HCT116 (cell line): ENCODE measurements at regions of chr16 and their contacts with region 1.

Region 1: DNA sequence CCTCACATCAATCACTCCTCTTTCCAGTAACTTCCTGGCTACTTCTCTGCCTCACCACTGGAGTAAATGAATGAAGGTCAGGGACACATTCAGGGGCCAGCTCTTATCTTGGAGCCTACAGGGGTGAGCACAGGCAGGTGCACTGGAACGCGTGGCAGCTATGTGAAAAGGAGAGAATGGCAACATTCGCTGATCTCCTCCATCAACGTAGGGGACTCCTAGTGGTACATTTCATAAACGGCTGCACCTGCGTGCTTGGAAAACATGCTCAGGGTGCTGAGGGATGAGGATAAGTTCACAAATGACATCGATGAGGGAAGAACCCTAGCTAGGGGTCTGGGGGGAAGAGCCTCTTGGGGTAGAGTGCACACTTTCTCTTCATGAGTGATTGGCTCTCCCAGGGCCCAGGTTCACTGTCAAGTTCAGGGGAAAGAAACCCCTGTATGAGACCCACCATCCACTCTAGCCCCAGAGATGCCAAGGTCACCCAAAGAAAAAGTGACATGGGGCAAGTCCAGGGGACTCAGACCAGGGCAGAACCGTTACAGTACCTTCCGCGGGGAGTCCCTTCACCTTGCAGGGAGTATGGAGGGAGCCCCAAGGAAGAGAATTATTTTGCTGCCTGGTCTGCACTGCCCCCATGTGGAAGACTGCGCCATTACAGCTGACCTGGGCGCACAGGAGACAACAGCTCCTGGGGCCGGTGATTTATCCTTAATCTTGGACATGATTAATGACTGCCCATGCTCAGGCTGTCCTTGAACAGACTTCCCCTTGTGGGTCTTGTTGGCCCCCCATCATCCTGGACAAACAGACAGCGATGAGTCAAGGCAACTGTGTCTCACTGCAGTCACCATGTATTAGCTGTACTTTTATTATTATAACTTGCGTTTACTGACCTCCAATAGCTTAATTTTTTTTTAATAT is 30.1 kb downstream of the VAC14 start:
- DNase-seq: peak; percentile 32
- ATAC-seq: peak; percentile 87
- H3K4me3 ChIP-seq: no peak overlapping the region
- H3K27ac ChIP-seq: no peak overlapping the region
- H3K4me1 ChIP-seq: peaks cover 3 to 18% of the 10 kb centered on the region in 2 experiments
- H3K27me3 ChIP-seq: no peaks in the 10 kb centered on the region
- CTCF ChIP-seq: peak; percentile 84 to 97 (median 92)
- POLR2A ChIP-seq: no peak
- RAD21 ChIP-seq: peak; percentile 96

Region 2: DNA sequence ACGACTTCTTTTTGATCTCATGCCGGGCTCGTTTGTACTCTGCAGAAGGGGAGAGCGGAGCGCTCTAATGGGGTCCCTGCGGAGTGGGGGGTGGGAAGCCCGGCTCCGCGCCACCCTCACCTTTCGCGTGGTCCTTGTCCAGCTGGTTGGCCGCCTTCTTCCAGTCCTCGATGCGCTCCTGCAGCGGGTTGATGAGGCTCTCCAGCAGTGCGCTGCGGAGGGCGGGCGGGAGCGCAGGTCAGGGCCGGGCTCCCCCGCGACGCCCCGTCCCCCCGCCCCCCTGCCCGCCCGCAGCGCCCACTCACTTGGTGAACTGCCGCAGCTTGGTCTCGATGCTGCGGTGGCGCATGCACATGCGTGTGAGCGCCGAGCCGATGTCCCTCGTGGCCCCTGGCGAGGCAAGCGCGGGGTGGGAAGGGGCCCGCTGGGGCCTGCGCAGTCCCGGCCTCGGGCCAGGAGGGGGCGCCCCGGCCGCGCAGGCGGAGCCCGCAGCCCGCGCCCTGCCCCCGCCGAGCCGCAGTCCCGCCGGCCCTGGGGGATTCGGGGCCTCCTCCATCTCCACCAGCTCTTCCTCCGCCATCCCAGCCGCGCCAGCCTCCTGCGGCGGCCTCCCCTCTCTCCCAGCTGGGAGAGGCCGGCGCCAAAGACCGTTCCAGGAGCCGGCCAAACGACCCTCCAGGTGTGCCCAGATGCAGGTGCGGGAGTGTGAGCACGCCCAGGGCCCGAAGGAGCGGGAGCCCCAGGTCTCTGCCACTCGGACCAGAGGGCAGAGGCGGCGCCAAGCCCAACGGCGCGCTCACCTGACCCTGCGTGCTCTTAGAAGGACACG is 91.0 kb before region 1 on chr16:
- CTCF ChIA-PET with region 1: interaction called, 19 read pairs
- POLR2A ChIA-PET with region 1: no interaction called
- RAD21 ChIA-PET with region 1: interaction called in 1 of 2 experiments, 3 read pairs
- intact Hi-C with region 1: loop called (anchors 1 kb)
- DNase-seq: no peak
- ATAC-seq: peak; percentile 74
- H3K4me3 ChIP-seq: no peak overlapping the region
- H3K27ac ChIP-seq: no peak overlapping the region; the same call in 1 of the 2 replicates
- H3K4me1 ChIP-seq: peaks cover 5 to 14% of the 10 kb centered on the region in 2 experiments; a peak in 3 of 4 replicates
- H3K27me3 ChIP-seq: no peaks in the 10 kb centered on the region
- CTCF ChIP-seq: peak in 1 of 3 experiments; percentile 40; a peak in 3 of 6 replicates
- POLR2A ChIP-seq: no peak
- RAD21 ChIP-seq: no peak

Region 3: DNA sequence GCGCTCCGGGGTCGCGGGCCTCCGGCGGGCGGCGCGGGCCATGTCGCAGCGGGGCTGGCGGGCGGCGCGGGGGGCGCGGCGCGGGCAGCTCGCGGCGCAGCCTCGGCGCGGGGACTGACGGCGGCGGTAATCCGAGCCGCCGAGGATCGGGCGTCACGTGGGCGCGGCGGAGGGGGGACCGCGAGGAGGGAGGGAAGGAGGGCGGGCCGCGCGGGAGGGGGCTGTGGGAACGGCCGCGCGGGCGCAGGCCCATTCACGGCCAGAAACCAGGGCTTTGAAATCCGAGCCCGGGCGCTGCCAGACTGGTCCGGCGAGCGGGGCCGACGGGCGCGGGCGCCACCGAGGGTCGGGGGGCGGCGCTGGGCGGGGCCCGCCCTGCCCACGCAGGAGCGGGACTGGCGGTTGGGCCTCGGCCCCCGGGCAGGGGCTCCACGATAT is 84.9 kb before region 1 on chr16 and contains the start of gene MTSS2:
- CTCF ChIA-PET with region 1: interaction called, 19 read pairs
- POLR2A ChIA-PET with region 1: interaction called, 3 read pairs
- RAD21 ChIA-PET with region 1: interaction called in 1 of 2 experiments, 6 read pairs
- intact Hi-C with region 1: no loop called
- DNase-seq: peak; percentile 35
- ATAC-seq: peak; percentile 77
- H3K4me3 ChIP-seq: peak within 1 kb of the TSS; percentile 86 to 95
- H3K27ac ChIP-seq: peak within 1 kb of the TSS; percentile 78; the same call in 1 of the 2 replicates
- H3K4me1 ChIP-seq: peaks cover 39 to 60% of the 10 kb centered on the region in 2 experiments
- H3K27me3 ChIP-seq: no peaks in the 10 kb centered on the region
- CTCF ChIP-seq: no peak
- POLR2A ChIP-seq: no peak
- RAD21 ChIP-seq: no peak
- total RNA-seq, gene MTSS2: 41.8 TPM

Region 4: GRCh38 chr16:70759666-70760065 is 11.2 kb before region 1 on chr16:
- CTCF ChIA-PET with region 1: interaction called, 15 read pairs
- POLR2A ChIA-PET with region 1: no interaction called
- RAD21 ChIA-PET with region 1: no interaction called
- intact Hi-C with region 1: no loop called
- DNase-seq: no peak
- ATAC-seq: no peak
- H3K4me3 ChIP-seq: no peak overlapping the region
- H3K27ac ChIP-seq: no peak overlapping the region
- H3K4me1 ChIP-seq: peaks cover 15 to 24% of the 10 kb centered on the region in 2 experiments
- H3K27me3 ChIP-seq: no peaks in the 10 kb centered on the region
- CTCF ChIP-seq: 0 out of 6 replicates have a peak, but pooled peaks of 1 of the 3 experiments have one; percentile 13
- POLR2A ChIP-seq: no peak
- RAD21 ChIP-seq: no peak

Region 5: GRCh38 chr16:71484006-71484893 is 713.4 kb after region 1 on chr16:
- CTCF ChIA-PET with region 1: no interaction called
- POLR2A ChIA-PET with region 1: no interaction called
- RAD21 ChIA-PET with region 1: no interaction called
- intact Hi-C with region 1: no loop called
- DNase-seq: peak; percentile 93
- ATAC-seq: peak; percentile 92
- H3K4me3 ChIP-seq: peak overlapping the region; percentile 71 to 75
- H3K27ac ChIP-seq: peak overlapping the region; percentile 77
- H3K4me1 ChIP-seq: peaks cover 4 to 13% of the 10 kb centered on the region in 2 experiments; a peak in 3 of 4 replicates
- H3K27me3 ChIP-seq: no peaks in the 10 kb centered on the region
- CTCF ChIP-seq: no peak
- POLR2A ChIP-seq: peak; percentile 81
- RAD21 ChIP-seq: no peak; the same call in 1 of the 2 replicates